Activated B cell treated with CpG ODN at 0.5 μM for 24 hours (primary cell): ENCODE measurements at regions of chr1 and their contacts with region 1.

Region 1: DNA sequence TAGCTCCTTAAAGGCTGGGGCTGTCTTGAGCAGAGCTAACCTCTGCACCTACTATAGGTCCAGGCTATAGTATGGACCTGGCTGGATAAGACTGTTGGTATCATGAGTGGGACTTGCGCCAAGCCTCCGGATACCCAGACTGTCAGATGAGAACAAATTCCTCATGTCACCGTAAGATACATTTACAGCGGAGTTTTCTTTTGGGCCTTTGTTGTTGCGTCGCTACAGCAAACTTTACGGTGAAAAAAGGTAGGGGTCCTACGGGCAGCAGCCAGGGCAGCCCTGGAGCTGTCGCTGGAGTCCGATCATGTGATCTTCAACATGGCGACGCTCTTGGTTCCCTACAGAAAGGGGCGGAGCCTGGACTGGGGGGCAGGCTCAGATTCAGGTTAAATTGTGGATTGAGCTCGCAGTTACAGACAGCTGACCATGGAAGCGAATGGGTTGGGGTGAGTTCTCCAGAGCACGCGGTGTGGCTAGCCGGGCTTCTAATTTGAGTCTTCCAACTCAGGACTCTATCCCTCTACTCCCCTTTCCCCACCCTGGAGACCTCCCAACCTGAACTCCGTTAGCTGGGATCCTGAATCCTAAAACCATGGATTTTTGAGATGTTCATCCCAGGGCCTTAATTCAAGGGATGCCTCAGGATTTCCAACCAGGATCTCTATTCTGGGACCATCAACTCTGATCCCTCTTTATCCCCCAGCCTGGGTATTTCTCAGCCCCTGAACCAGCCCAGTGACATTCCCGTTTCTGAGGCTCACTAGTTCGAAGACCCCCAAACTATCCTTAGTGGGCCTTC is at the start of gene UROD:
- DNase-seq: peak; percentile 69
- ATAC-seq: peak; percentile 84
- H3K4me3 Mint-ChIP-seq: peak within 1 kb of the TSS; percentile 83
- H3K27ac Mint-ChIP-seq: peak within 1 kb of the TSS; percentile 81
- H3K4me1 Mint-ChIP-seq: peaks cover 43% of the 10 kb centered on the region
- H3K27me3 Mint-ChIP-seq: no peaks in the 10 kb centered on the region
- CTCF ChIP-seq: no peak
- total RNA-seq, gene UROD: 60.3 and 64.9 TPM in 2 replicates

Region 2: DNA sequence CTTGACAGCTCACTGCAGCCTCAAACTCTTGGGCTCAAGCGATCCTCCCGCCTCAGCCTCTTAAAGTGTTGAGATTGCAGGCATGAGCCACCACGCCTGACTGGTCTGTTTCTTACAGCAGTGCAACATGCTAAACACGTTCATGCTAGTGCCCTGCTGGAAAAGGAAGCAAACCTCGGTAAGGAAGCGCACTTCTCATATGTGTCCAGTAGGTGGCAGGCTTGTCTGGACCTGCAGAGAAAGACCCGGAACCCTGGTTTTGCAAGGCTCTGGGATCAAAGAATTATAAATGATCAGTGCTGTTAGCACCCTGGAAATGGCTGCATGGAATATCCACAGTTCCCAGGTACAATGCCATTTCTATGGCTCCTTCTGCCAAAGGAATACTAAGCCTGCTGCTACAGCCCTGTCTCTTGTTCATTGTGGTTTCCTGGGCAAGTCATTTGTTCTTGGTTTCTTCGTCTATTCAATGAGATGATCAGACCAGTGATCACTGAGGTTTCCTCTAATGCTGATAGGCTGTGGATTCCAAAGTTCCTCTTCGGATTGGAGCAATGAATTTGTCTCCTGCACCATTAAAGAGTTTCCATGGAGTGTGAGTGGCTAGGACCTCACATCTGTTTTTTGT is 297.0 kb before region 1 on chr1:
- CTCF ChIA-PET with region 1: interaction called, 4 read pairs
- POLR2A ChIA-PET with region 1: interaction called, 8 read pairs
- intact Hi-C with region 1: loop called (anchors 1 kb)
- DNase-seq: no peak
- ATAC-seq: peak; percentile 78
- H3K4me3 Mint-ChIP-seq: peak overlapping the region; percentile 58
- H3K27ac Mint-ChIP-seq: peak overlapping the region; percentile 89
- H3K4me1 Mint-ChIP-seq: peaks cover 75% of the 10 kb centered on the region
- H3K27me3 Mint-ChIP-seq: no peaks in the 10 kb centered on the region
- CTCF ChIP-seq: peak; percentile 72

Region 3: GRCh38 chr1:44799770-44800584 is 212.1 kb before region 1 on chr1 and contains the start of gene PLK3:
- CTCF ChIA-PET with region 1: interaction called, 13 read pairs
- POLR2A ChIA-PET with region 1: interaction called, 54 read pairs
- intact Hi-C with region 1: loop called (anchors 1 kb)
- DNase-seq: peak; percentile 94
- ATAC-seq: peak; percentile 88
- H3K4me3 Mint-ChIP-seq: peak within 1 kb of the TSS; percentile 97
- H3K27ac Mint-ChIP-seq: peak within 1 kb of the TSS; percentile 100
- H3K4me1 Mint-ChIP-seq: peaks cover 33% of the 10 kb centered on the region
- H3K27me3 Mint-ChIP-seq: no peaks in the 10 kb centered on the region
- CTCF ChIP-seq: peak; percentile 30
- total RNA-seq, gene PLK3: 63.0 and 82.0 TPM in 2 replicates

Region 4: GRCh38 chr1:45205910-45206721 is 194.1 kb after region 1 on chr1 and contains the start of gene ZSWIM5:
- CTCF ChIA-PET with region 1: no interaction called
- POLR2A ChIA-PET with region 1: no interaction called
- intact Hi-C with region 1: loop called (anchors 5 kb)
- DNase-seq: peak; percentile 64
- ATAC-seq: peak; percentile 79
- H3K4me3 Mint-ChIP-seq: peak within 1 kb of the TSS; percentile 84
- H3K27ac Mint-ChIP-seq: peak within 1 kb of the TSS; percentile 33
- H3K4me1 Mint-ChIP-seq: peaks cover 13% of the 10 kb centered on the region
- H3K27me3 Mint-ChIP-seq: peaks cover 22% of the 10 kb centered on the region
- CTCF ChIP-seq: no peak
- total RNA-seq, gene ZSWIM5: 1.6 and 2.3 TPM in 2 replicates

Region 5: DNA sequence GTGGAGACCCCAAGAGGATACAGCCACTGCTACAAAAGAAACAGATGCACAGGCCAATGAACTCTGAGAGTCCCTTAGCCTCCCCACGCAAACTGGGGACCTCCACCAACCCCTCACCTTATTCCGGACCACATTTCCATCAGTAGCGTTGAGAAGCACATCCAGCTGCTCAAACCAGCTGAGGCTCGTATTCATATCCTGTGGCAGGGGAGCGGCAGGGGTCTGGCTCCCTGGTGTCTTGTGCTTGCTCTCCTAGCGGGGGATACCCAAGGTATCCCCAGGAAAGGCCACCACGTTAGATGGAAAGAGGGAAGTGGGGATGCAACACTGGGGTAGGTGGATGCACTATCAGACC is 487.4 kb after region 1 on chr1:
- CTCF ChIA-PET with region 1: interaction called, 123 read pairs
- POLR2A ChIA-PET with region 1: interaction called, 10 read pairs
- intact Hi-C with region 1: no loop called
- DNase-seq: no peak
- ATAC-seq: no peak
- H3K4me3 Mint-ChIP-seq: peak overlapping the region; percentile 97
- H3K27ac Mint-ChIP-seq: peak overlapping the region; percentile 88
- H3K4me1 Mint-ChIP-seq: peaks cover 27% of the 10 kb centered on the region
- H3K27me3 Mint-ChIP-seq: no peaks in the 10 kb centered on the region
- CTCF ChIP-seq: no peak

Region 6: DNA sequence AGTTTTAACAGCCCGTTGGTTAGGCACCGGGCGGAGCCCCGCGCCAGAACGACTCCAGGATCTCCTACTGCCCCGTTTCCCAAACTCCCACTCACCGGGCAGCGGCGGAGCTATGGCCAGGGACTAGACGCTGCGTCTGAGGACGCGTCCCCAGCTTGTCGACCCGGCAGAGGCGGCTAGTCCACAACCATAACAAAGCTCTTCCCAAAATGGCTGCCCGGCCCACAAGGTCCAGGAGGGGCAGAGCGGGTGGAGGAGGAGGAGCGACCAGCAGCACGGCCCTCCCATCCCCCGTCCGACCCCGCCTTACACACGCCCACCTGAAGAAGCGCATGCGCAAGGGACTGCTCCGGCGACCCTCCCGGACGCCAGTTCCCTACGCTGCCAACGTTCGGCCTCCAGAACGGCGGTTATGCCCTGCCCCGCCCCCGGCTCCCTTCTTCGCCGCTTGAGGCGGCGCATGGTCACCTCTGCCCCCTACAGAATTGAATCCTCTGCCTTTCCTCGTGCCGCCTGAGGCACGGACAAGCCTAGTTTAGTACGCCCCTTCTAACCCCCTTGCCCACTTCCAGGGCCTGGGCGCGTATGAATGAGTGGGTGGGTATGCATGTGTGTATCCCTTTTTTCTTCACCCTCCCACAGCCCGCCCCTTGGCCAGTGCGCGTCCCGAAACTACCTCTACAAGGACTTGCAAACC is 674.4 kb after region 1 on chr1 and contains the start of gene GPBP1L1:
- CTCF ChIA-PET with region 1: no interaction called
- POLR2A ChIA-PET with region 1: interaction called, 9 read pairs
- intact Hi-C with region 1: loop called (anchors 5 kb)
- DNase-seq: peak; percentile 98
- ATAC-seq: peak; percentile 73
- H3K4me3 Mint-ChIP-seq: peak within 1 kb of the TSS; percentile 99
- H3K27ac Mint-ChIP-seq: peak within 1 kb of the TSS; percentile 100
- H3K4me1 Mint-ChIP-seq: peaks cover 53% of the 10 kb centered on the region
- H3K27me3 Mint-ChIP-seq: no peaks in the 10 kb centered on the region
- CTCF ChIP-seq: no peak
- total RNA-seq, gene GPBP1L1: 133 and 138 TPM in 2 replicates